ENCODE measurements at regions of chr1 and their contacts with region 1.

Region 1: DNA sequence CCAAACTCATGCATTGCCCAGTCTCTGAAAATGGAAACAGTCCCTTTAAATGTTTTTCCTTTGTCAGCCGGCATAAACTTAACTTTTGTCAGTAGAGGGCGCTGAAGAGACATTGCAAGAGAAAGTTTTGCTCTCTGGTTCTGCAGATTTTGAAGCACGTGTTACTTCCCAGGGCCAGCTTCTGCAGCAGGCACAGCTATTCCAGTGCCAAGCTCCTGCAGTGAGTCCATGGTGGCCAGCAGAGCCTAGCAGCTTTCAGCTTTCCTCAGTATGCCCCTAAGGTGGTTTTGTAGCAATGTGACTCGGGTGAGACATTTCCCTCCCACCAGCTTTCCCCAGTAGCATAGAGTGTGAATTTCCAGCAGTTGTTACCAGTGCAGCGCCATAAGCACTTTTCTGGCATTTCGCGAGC is 2.6 kb upstream of the IFI44L start:
- DNase-seq: peak; percentile 77

Region 2: DNA sequence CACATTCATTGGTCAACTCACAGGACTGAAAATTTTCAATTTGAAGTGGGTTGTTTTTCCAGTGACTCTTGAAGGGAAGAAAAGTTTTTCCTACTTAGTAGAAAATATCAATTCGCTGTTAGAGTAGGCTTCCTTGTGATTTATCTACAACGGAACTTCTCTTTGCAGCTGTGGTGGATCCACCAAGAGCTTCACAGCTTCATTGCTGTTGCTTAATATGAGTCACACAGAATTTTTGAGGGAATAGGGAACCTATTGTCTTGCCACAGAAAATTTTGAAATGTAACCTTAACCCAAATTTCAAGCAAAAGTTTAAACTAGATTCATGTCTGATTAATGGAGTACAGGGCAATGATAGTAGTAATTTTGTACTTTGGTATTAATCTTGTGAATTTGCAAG is 55.8 kb before region 1 on chr1:
- intact Hi-C with region 1: no loop called
- DNase-seq: no peak

Region 3: DNA sequence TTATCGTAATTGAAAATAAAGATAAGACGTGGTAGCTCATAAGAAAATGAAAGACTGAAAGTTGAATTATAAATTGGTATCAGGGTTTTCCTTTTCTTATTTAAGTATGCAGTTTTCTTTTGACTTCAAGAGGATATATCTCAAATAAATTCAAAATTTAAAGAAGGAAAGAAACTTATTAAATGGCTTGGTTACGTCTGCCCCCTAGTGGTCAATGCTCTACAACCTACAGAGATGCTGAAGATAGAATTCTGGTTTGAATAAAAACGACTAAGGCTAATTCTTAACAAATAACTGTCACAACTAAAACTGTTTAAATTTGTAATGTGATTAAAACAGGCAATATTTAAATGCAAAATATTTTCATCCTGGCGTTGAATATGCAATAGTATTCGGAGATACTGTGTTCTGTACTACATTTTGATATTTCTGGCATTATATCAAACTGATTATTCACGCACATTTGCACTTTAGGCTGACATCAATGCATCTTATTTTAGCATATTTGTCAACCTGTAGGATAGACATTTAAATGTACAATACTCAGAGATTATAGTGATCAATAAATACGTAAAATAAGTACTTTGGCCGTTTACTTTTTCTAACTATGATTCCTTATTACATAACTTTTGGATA is 58.8 kb after region 1 on chr1:
- intact Hi-C with region 1: loop called (anchors 5 to 10 kb)
- DNase-seq: no peak

Region 4: GRCh38 chr1:79243486-79243885 is 625.9 kb after region 1 on chr1:
- intact Hi-C with region 1: loop called in 1 of 2 experiments (anchors 5 kb)
- DNase-seq: no peak

Measured in posterior vena cava (tissue), 2 donors.